ENCODE measurements at regions of chr19 and their contacts with region 1.

Region 1: DNA sequence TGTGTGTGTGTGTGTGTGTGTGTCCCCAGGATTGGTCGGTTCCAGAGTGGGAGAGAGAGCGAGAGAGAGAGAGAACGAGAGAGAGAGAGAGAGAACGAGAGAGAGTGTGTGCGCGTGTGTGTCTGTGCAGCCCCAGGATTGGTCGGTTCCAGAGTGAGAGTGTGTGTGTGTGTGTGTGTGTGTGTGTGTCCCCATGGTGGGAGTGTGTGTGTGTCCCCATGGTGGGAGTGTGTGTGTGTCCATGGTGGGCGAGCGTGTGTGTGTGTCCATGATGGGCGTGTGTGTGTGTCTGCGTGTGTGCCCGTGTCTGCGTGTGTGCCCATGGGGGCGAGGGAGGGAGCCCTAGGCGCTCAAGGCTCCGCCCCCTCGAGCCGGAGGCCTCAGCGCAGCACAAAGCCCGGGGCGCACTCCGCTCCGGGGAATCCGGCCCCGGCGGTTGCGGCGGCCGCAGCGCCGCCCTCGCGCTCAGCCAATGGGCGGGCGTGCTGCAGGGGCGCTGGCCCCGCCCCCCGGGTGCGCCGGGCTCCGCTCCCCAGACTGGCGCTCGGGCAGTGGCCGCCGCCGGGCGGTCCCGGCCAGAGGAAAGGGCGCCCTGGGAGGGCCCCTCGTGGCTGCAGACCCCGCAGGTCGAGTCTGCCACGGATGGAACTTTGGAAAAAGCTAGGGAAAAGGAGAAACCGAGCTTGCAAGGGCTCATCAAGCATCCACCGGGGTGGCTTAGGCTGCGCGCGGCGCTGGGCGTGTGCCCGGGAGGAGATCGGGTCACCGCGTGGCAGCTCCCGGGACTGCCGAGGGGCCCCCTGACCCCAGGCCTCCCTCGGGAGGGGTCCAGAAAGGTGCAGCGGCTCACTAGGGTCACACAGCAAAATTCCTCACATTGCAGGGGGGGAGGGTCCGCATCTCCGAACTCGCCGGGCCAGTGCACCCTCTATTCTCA is 96.2 kb downstream of the INSR start:
- DNase-seq: peak; percentile 95
- ATAC-seq: peak; percentile 84
- H3K4me3 Mint-ChIP-seq: peak overlapping the region; percentile 77
- H3K27ac Mint-ChIP-seq: peak overlapping the region; percentile 88
- H3K4me1 Mint-ChIP-seq: peaks cover 16% of the 10 kb centered on the region
- H3K27me3 Mint-ChIP-seq: peaks cover 21% of the 10 kb centered on the region

Region 2: GRCh38 chr19:6674868-6675305 is 523.1 kb before region 1 on chr19:
- CTCF ChIA-PET with region 1: no interaction called
- POLR2A ChIA-PET with region 1: no interaction called
- intact Hi-C with region 1: loop called (anchors 5 kb)
- DNase-seq: peak; percentile 97
- ATAC-seq: peak; percentile 61
- H3K4me3 Mint-ChIP-seq: peak overlapping the region; percentile 57
- H3K27ac Mint-ChIP-seq: peak overlapping the region; percentile 93
- H3K4me1 Mint-ChIP-seq: peaks cover 75% of the 10 kb centered on the region
- H3K27me3 Mint-ChIP-seq: no peaks in the 10 kb centered on the region

Region 3: GRCh38 chr19:7214007-7214811 is 16.2 kb after region 1 on chr19:
- CTCF ChIA-PET with region 1: interaction called, 4 read pairs
- POLR2A ChIA-PET with region 1: interaction called, 3 read pairs
- intact Hi-C with region 1: loop called in 1 of 2 experiments (anchors 2 kb)
- DNase-seq: peak; percentile 26
- ATAC-seq: peak; percentile 45
- H3K4me3 Mint-ChIP-seq: no peak overlapping the region
- H3K27ac Mint-ChIP-seq: no peak overlapping the region
- H3K4me1 Mint-ChIP-seq: peaks cover 50% of the 10 kb centered on the region
- H3K27me3 Mint-ChIP-seq: peaks cover 3% of the 10 kb centered on the region

Region 4: GRCh38 chr19:7301525-7301924 is 103.5 kb after region 1 on chr19:
- CTCF ChIA-PET with region 1: no interaction called
- POLR2A ChIA-PET with region 1: no interaction called
- intact Hi-C with region 1: no loop called
- DNase-seq: no peak
- ATAC-seq: no peak
- H3K4me3 Mint-ChIP-seq: no peak overlapping the region
- H3K27ac Mint-ChIP-seq: no peak overlapping the region
- H3K4me1 Mint-ChIP-seq: no peaks in the 10 kb centered on the region
- H3K27me3 Mint-ChIP-seq: peaks cover 9% of the 10 kb centered on the region

Region 5: DNA sequence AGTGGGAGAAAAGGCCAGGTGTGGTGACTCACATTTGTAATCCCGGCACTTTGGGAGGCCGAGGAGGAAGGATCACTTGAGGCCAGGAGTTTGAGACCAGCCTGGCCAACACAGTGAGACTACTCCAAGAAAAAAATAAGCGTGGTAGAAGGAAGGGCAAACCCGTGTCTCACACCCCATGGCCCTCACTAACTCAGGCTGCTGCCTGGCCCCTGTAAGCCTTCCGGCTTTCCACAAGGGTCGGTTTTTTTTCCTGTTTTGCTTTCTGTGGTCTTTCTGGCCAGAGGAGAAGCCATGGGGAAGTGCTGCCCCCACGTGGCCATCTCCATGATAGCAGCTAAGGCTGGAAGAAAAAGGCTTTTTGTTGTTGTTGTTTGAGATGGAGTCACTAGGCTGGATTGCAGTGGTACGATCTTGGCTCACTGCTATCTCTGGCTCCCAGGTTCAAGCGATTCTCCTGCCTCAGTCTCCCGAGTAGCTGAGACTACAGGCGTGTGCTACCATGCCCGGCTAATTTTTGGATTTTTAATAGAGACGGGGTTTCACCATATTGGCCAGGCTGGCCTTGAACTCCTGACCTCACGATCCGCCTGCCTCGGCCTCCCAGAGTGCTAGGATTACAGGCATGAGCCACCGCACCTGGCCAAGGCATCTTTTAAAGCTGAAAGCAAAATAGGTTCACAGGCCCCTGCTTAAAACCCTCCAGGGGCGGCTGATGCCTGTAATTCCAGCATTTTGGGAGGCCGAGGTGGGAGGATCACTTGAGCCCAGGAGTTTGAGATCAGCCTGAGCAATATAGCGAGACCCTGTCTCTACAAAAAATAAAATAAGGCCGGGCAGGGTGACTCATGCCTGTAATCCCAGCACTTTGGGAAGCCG is 143.2 kb after region 1 on chr19:
- CTCF ChIA-PET with region 1: no interaction called
- POLR2A ChIA-PET with region 1: no interaction called
- intact Hi-C with region 1: loop called (anchors 5 kb)
- DNase-seq: peak; percentile 91
- ATAC-seq: peak; percentile 18
- H3K4me3 Mint-ChIP-seq: peak overlapping the region; percentile 3
- H3K27ac Mint-ChIP-seq: peak overlapping the region; percentile 63
- H3K4me1 Mint-ChIP-seq: peaks cover 54% of the 10 kb centered on the region
- H3K27me3 Mint-ChIP-seq: no peaks in the 10 kb centered on the region

Region 6: DNA sequence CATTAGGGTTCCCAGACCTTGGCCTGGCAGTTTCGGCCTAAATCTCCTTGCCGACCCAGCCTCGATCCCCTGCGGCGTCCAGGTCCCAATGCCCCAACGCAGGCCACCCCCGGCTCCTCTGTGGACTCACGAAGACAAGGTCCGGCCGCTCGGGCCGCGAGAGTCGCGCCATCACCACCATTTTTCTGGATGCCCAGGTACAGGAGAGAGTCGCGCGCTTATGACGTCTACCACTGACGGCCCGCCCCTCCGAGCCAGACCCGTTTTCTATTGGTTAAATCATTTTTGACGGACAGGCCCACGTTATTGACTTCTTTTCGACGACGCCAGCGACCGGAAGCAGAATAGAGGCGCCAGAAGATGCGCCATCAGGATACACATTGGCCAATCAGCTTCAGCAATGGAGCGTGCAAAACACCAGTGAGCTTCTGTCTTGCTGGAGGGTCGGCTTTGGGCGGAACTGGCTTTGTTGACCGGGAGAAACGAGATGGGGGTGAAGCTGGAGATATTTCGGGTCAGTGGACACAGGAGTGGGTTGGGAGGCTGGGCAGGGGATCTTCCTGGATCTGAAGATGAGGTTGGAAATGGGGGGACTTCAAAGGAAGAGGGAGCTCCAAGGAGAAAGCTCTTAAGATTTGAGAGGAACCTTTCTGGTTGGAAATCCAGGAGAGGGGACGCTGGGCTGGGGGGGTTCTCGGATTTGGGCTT is 431.5 kb after region 1 on chr19 and contains the starts of genes PET100 and XAB2:
- CTCF ChIA-PET with region 1: no interaction called
- POLR2A ChIA-PET with region 1: no interaction called
- intact Hi-C with region 1: loop called in 1 of 2 experiments (anchors 1 kb)
- DNase-seq: peak; percentile 97
- ATAC-seq: peak; percentile 99
- H3K4me3 Mint-ChIP-seq: peak within 1 kb of the TSS; percentile 88
- H3K27ac Mint-ChIP-seq: peak within 1 kb of the TSS; percentile 97
- H3K4me1 Mint-ChIP-seq: peaks cover 32% of the 10 kb centered on the region
- H3K27me3 Mint-ChIP-seq: no peaks in the 10 kb centered on the region
- total RNA-seq, gene PET100: 45.1 to 99.4 TPM
- total RNA-seq, gene XAB2: 45.9 to 48.3 TPM